HEK293 (cell line): ENCODE measurements at regions of chr3 and their contacts with region 1.

Region 1: DNA sequence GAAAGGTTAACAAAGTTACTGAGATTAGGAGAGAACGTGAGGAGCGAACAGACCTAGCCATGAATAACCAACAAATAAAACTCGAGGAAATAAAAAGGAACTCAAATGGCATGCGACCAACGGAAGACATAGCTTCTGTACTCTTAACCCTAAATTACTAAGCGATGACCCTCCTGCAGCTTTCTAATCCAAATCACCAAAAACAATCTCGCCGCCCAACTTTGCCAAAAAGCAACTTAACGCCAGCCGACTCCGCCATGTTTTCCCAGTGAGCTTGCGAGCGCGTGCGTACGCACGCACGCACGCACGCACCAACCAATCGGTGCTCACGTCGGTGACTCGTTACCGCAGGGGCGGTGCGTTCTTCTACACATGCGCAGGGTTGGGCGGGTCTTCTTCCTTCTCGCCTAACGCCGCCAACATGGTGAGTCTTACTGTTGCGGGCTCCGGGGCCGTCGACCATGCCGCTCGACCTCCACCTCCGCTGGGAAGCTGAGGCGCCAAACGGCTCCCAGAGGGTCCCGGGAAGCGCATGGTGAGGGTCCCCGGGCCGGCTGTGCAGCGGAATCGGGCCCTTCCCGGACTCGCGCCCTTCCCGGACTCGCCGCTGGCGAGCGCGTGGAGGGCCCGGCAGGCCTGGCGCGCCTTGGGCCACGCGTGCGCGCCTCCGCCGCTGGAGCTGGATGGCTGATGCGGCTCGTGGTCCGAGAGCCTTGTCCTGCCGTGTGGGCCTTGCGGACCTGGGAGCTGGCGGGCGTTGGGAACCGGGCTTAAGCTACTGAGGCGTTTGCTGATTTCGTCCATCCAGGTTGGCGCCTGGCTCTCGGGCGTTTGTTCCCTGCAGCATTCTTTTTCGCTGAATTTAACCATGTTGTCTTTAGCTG is at the start of gene RPL14:
- H3K4me3 ChIP-seq: peak within 1 kb of the TSS; percentile 90
- H3K27ac ChIP-seq: peak within 1 kb of the TSS; percentile 62; the same call in 1 of the 2 replicates
- H3K4me1 ChIP-seq: no peaks in the 10 kb centered on the region
- CTCF ChIP-seq: no peak

Region 2: DNA sequence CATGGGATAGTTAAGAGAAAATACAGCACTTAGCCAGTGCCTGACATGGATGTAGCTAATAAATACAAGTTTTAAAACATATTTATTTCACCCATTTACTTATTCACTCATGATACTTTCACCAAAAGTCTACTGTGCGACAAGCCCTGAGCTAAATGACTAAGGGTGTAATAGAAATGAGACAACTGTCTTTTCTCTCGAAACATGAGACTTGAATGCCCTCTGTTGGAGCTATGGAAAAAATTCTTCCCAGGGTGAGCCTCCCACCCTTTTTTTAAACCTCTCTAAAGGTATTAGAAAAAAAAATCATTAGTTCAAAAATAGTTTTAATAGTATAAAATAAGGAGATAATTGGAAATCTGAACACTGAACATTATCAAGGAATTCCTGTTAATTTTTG is 24.4 kb before region 1 on chr3:
- CTCF ChIA-PET with region 1: no interaction called
- POLR2A ChIA-PET with region 1: no interaction called
- H3K4me3 ChIP-seq: no peak overlapping the region
- H3K27ac ChIP-seq: no peak overlapping the region
- H3K4me1 ChIP-seq: no peaks in the 10 kb centered on the region
- CTCF ChIP-seq: no peak

Region 3: GRCh38 chr3:40476478-40477470 is 19.6 kb after region 1 on chr3 and contains the start of gene ZNF619:
- CTCF ChIA-PET with region 1: interaction called, 3 read pairs
- POLR2A ChIA-PET with region 1: interaction called, 13 read pairs
- H3K4me3 ChIP-seq: peak within 1 kb of the TSS; percentile 73
- H3K27ac ChIP-seq: peak within 1 kb of the TSS; percentile 56; the same call in 1 of the 2 replicates
- H3K4me1 ChIP-seq: no peaks in the 10 kb centered on the region; the same call in 1 of the 2 replicates
- CTCF ChIP-seq: no peak

Region 4: DNA sequence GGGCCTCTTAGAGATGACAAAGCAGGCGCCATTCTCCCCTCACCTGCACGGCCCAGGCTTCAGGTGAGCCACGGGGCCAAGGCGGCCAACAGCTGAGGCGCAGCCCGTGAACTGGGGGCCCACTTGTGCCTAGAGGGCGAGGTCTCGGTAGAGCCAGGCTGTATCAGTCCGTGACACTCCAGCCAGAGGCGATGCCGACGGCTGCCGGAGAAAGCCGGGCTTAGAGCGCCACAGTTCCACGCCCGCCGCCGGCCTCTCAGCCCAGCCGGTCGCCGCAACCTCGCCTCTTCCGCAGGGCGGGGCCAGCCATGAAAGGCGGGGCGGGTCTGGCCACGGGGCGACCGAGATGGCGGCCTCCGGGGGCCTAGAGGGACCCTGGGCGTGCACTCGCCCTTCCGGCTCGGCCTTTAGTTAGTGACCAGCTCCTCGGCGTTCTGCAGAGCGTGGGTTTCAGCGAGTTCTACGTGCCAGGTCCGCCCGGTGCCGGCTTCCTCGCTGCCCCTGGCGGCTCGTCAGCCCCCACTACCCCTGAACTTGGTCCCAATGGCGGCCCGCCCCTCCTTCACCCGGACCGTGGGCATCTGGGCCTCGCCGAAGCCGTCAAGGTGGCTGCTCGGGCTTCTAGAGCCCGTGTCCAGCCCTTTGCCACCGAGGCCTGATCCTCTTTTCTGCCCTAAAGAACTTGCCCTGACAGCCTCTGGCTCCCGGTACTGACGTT is 67.5 kb after region 1 on chr3 and contains the start of gene ZNF621:
- CTCF ChIA-PET with region 1: interaction called, 3 read pairs
- POLR2A ChIA-PET with region 1: interaction called, 11 read pairs
- H3K4me3 ChIP-seq: peak within 1 kb of the TSS; percentile 89
- H3K27ac ChIP-seq: peak within 1 kb of the TSS; percentile 75
- H3K4me1 ChIP-seq: no peaks in the 10 kb centered on the region
- CTCF ChIP-seq: peak; percentile 54; the same call in 1 of the 2 replicates